ENCODE measurements at regions of chr14 and their contacts with region 1.

Region 1: DNA sequence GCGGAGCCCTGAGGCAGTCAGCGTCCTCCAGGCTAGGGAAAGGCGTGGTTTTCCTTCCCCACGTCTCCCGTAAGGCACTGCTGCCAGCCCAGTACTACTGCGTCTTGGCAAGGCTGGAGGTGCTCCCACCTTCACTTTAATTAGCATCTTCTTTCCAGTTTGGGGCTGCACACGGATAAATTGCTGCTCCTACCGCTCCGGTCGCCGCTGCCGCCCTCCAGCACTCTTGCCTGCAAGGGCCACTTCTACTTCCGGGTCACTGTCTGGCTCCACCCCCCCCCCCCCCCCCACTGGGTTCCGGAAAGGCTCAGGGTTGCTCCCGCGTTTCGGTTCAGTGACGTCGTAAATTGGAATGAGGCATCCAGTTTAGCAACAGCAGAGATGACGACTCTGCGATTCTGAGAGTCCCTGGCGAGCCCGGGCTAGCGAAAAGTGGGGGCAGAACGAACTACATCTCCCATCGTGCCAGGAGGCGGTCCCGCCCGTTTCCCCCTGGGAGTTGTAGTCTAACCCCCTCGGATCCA is at the start of gene NEDD8:
- DNase-seq: peak; percentile 87 to 97 (median 93)
- H3K4me3 ChIP-seq: peak within 1 kb of the TSS; percentile 71 to 100 (median 92)
- H3K27ac ChIP-seq: peak within 1 kb of the TSS; percentile 32 to 98 (median 91)
- H3K27me3 ChIP-seq: no peaks in the 10 kb centered on the region
- CTCF ChIP-seq: peak in 24 of 56 donors; percentile 6 to 53 (median 20)
- total RNA-seq, gene NEDD8: 101 to 287 (median 196) TPM

Region 2: DNA sequence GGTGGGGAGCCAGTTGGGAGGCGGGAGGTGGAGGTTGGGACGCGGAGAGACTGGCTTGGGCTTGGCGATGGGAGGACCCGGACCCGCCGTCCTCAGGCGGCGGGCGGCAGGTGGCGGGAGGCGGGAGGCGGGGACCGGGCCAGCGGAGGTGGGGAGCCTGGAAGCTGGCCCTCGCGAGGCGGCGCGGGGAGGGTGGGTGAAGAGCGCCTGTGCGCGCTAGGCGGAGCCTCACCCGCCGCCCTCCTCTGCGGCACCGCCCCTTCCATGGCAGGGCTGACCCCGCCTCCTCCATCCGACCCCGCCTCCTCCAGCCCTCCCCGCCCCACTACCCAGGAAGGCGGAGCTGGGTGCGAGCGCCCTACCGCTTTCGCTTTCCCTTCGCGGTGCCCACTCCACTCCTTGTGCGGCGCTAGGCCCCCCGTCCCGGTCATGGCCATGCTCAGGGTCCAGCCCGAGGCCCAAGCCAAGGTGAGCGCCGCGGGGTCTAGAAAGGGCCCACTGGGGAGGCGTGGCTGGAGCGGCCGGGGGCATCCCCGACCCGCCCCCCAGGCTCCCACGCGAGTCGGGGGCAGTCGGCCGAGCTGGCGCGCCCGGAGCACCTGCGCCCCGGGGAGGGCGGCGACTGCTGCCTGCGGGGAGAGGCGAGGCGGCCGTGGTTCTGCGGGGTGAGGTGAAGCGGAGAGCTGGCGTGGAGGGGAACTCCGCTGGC is 96.2 kb before region 1 on chr14 and contains the start of gene PSME1:
- intact Hi-C with region 1: loop called in 1 of 2 experiments (anchors 5 kb)
- DNase-seq: peak; percentile 83 to 96 (median 90)
- H3K4me3 ChIP-seq: peak within 1 kb of the TSS; percentile 64 to 99 (median 92)
- H3K27ac ChIP-seq: peak within 1 kb of the TSS; percentile 57 to 96 (median 90)
- H3K27me3 ChIP-seq: no peaks in the 10 kb centered on the region
- CTCF ChIP-seq: peak in 41 of 56 donors; percentile 13 to 73 (median 40)
- total RNA-seq, gene PSME1: 36.4 to 74.9 (median 51.1) TPM

Region 3: GRCh38 chr14:24212924-24213865 is 19.0 kb before region 1 on chr14 and contains the start of gene CHMP4A:
- intact Hi-C with region 1: loop called in 1 of 2 experiments (anchors 1 kb)
- DNase-seq: peak; percentile 85 to 98 (median 94)
- H3K4me3 ChIP-seq: peak within 1 kb of the TSS; percentile 44 to 97 (median 84)
- H3K27ac ChIP-seq: peak within 1 kb of the TSS; percentile 70 to 97 (median 90)
- H3K27me3 ChIP-seq: no peaks in the 10 kb centered on the region
- CTCF ChIP-seq: peak in 38 of 56 donors; percentile 11 to 55 (median 32)
- total RNA-seq, gene CHMP4A: 36.8 to 89.6 (median 58.1) TPM

Region 4: DNA sequence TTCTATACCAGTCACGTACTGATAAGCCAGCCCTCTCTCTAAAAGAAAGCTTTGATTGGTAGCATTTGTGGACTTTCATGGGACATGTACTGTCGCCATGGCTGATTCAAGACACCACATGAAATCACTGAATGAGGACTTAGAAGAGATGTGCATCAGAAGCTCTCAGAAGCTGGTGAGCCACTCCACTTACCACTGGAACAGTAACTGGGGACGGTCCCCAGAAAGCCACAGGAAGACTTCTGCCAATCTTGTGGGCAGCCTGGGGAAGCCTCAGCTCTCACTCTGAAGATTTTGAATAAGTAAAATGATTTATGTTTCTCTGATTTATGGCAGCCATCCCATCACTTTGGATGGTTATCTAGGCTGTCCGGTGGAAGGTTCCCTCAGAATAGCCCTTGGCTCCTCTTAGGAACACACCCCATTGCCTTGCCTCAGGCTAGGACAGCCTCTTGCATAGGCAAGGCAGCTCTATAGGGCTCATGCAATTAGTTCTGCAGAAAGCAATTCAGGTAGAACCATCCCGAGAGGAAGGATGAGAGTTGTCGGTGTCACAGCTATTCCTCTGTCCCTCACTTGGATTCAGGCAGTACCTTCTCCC is 57.6 kb after region 1 on chr14:
- intact Hi-C with region 1: no loop called
- DNase-seq: no peak
- H3K4me3 ChIP-seq: no peak overlapping the region
- H3K27ac ChIP-seq: no peak overlapping the region
- H3K27me3 ChIP-seq: no peaks in the 10 kb centered on the region
- CTCF ChIP-seq: no peak

Region 5: DNA sequence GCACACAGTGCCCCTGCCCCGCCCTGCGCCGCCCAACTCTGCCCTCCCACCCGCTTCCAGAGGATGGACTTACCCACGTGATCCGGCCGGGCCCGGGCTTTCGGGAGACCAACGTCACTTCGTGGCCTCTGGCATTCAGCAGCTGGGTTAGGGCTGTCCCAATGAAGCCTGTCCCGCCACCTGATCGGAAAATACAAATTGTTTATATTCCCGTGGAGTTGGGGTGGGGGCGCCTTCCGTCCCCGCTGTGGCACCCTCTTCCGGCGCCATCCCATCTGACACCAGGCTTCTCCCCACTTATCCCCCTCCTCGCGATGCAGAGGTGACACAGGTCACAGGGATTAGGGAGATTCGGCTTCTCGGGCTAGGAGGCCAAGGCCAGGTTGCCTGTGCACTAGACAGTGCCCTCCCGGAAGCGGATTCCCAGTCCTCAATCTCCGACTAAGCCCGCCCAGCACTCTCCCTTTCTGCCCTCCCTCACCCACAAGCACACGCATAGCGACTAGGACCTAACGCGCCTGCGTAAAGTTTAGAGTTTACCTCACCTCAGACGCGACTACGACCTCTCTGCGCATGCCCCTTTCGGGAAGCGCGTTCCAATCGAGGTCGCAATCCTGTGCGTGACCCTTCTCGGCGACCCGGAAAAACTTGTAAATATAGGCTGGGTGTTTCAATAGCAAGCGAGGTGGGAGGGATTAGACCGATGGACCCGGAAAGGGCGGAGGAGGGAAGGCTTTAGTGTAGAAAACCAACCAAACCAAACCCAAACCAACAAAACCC is 210.3 kb after region 1 on chr14 and contains the start of gene SDR39U1:
- intact Hi-C with region 1: loop called in 1 of 2 experiments (anchors 5 kb)
- DNase-seq: peak; percentile 92 to 98 (median 96)
- H3K4me3 ChIP-seq: peak within 1 kb of the TSS; percentile 57 to 98 (median 87)
- H3K27ac ChIP-seq: peak within 1 kb of the TSS; percentile 82 to 100 (median 99)
- H3K27me3 ChIP-seq: no peaks in the 10 kb centered on the region
- CTCF ChIP-seq: peak in 21 of 56 donors; percentile 4 to 50 (median 26)
- total RNA-seq, gene SDR39U1: 55.2 to 101 (median 73.3) TPM

Measured in dorsolateral prefrontal cortex (tissue), 120 donors.